ENCODE measurements at regions of chr19 and their contacts with region 1.

Region 1: GRCh38 chr19:45717166-45717982 is 13.3 kb downstream of the FBXO46 start:
- DNase-seq: peak; percentile 98 to 99 (median 99)
- ATAC-seq: peak; percentile 90 to 95 (median 93)
- H3K4me3 ChIP-seq: peak overlapping the region; percentile 24 to 51 (median 37)
- H3K27ac ChIP-seq: peak overlapping the region; percentile 77 to 96 (median 84)
- H3K4me1 ChIP-seq: peaks cover 0 to 14% (median 8%) of the 10 kb centered on the region in 3 donors
- H3K27me3 ChIP-seq: no peaks in the 10 kb centered on the region
- CTCF ChIP-seq: no peak

Region 2: GRCh38 chr19:45496349-45496953 is 220.9 kb before region 1 on chr19:
- intact Hi-C with region 1: no loop called
- DNase-seq: peak in 5 of 6 donors; percentile 46 to 84 (median 66)
- ATAC-seq: peak; percentile 23 to 58 (median 44)
- H3K4me3 ChIP-seq: peak overlapping the region; percentile 55 to 80 (median 62)
- H3K27ac ChIP-seq: no peak overlapping the region
- H3K4me1 ChIP-seq: peaks cover 0 to 10% (median 7%) of the 10 kb centered on the region in 3 donors
- H3K27me3 ChIP-seq: peaks cover 0 to 4% (median 0%) of the 10 kb centered on the region in 4 donors
- CTCF ChIP-seq: no peak

Region 3: DNA sequence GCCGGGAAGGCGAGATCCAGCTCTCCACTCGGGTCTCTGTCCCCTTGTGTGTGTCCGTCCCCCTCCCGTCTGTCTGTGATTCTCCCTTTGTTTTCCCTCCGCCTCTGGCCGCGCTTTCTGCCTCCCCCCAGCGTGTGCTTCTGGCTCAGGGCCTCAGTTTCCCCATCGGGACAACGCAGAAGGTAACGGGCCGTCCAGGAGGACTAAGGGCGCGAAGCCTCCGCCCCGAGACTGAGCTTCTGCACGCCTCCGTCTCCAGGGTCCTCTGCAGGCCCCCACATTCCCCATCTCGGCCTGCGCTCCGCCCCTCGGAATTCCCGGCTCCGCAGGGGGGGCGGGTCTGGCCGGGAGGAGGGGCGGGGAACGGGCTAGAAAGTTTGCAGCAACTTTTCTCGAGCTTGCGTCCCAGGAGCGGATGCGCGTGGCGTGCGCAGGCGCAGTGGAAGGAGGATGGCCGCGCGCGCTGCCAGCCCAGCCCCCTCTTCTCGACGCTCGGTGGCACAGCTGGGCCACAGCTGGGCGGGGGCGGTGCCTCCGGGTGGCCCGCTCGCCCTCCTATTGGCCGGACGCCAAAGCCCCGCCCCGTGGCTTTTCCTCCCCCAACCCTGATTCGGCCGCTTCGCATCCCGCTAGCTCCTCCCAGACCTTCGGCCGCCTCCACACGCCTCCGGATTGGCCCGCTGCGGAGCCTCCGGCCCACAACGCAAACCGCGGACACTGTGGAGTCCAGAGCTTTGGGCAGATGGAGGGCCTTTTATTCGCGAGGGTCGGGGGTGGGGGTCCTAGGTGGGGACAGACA is 51.8 kb after region 1 on chr19 and contains the start of gene SIX5:
- intact Hi-C with region 1: loop called in 1 of 3 experiments (anchors 10 kb)
- DNase-seq: peak; percentile 97 to 100 (median 100)
- ATAC-seq: peak; percentile 44 to 68 (median 51)
- H3K4me3 ChIP-seq: peak within 1 kb of the TSS; percentile 74 to 96 (median 86)
- H3K27ac ChIP-seq: peak within 1 kb of the TSS; percentile 91 to 97 (median 96)
- H3K4me1 ChIP-seq: peaks cover 30 to 39% (median 33%) of the 10 kb centered on the region in 3 donors
- H3K27me3 ChIP-seq: no peaks in the 10 kb centered on the region
- CTCF ChIP-seq: no peak
- total RNA-seq, gene SIX5: 18.7 to 38.2 (median 28.0) TPM

Region 4: DNA sequence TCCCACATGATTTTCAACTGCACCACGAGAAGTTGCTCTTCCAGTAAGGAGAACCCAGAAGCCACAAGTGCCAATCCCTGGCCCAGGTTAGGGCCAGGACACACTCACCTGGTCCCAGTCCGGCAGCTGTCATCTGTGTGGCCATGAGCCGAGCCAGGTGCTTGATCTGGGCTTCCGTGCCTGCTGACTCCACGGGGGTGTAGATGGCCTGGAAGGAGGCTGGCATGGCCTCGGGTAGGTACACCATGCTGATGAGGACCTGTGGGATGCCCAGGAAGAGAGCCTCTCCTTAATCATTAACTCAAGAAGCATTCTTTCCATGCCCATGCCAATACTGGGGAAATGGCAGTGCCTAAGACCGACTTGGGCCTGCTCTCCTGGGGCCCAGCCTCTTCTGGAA is 117.6 kb after region 1 on chr19:
- intact Hi-C with region 1: no loop called
- DNase-seq: peak in 1 of 6 donors; percentile 28
- ATAC-seq: no peak
- H3K4me3 ChIP-seq: no peak overlapping the region
- H3K27ac ChIP-seq: no peak overlapping the region
- H3K4me1 ChIP-seq: no peaks in the 10 kb centered on the region
- H3K27me3 ChIP-seq: no peaks in the 10 kb centered on the region
- CTCF ChIP-seq: no peak